HAP-1 (cell line): ENCODE measurements at regions of chr17 and their contacts with region 1.

Region 1: GRCh38 chr17:60641810-60642220 is 35.8 kb upstream of the BCAS3 start:
- DNase-seq: peak; percentile 83 to 87
- H3K4me3 ChIP-seq: no peak overlapping the region
- H3K4me1 ChIP-seq: peaks cover 9% of the 10 kb centered on the region
- H3K27me3 ChIP-seq: no peaks in the 10 kb centered on the region

Region 2: GRCh38 chr17:60135151-60135950 is 506.5 kb before region 1 on chr17:
- in situ Hi-C with region 1: loop called (anchors 25 kb)
- DNase-seq: peak; percentile 88 to 93
- H3K4me3 ChIP-seq: peak overlapping the region; percentile 63
- H3K4me1 ChIP-seq: peaks cover 3% of the 10 kb centered on the region; the same call in 1 of the 2 replicates
- H3K27me3 ChIP-seq: no peaks in the 10 kb centered on the region; the same call in 1 of the 2 replicates